ENCODE measurements at regions of chr4 and their contacts with region 1.

Region 1: GRCh38 chr4:55336136-55337034 is 9.7 kb upstream of the SRD5A3 start:
- DNase-seq: no peak
- H3K4me3 ChIP-seq: no peak overlapping the region
- H3K27ac ChIP-seq: no peak overlapping the region
- H3K4me1 ChIP-seq: no peaks in the 10 kb centered on the region
- H3K27me3 ChIP-seq: no peaks in the 10 kb centered on the region
- CTCF ChIP-seq: no peak

Region 2: DNA sequence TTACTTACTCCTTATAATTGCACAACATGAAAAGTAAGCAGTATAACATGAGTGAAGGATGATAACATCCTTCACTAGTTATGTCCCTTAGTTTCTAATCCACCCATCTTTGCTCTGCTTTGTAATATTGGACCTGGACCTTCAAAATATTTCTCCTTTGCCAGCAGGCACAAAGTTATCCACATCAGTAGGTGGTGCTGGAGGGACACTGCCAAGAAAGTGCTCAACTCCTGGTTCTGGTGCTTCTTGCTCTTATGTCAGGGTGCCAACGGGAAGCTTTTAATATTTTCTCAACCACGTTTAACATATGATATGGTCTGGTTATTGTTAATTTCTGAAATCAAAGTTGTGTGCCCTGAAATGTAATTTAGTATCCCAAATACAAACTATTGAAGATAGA is 108.4 kb after region 1 on chr4:
- CTCF ChIA-PET with region 1: interaction called, 8 read pairs
- POLR2A ChIA-PET with region 1: interaction called, 10 read pairs
- intact Hi-C with region 1: no loop called
- DNase-seq: no peak
- H3K4me3 ChIP-seq: no peak overlapping the region
- H3K27ac ChIP-seq: no peak overlapping the region
- H3K4me1 ChIP-seq: no peaks in the 10 kb centered on the region
- H3K27me3 ChIP-seq: no peaks in the 10 kb centered on the region
- CTCF ChIP-seq: no peak; the same call in 1 of the 2 replicates

Measured in PC-9 (cell line).